PC-3 (cell line): ENCODE measurements at regions of chr4 and their contacts with region 1.

Region 1: GRCh38 chr4:101020956-101021355 is 326.4 kb downstream of the PPP3CA start:
- DNase-seq: peak; percentile 69
- ATAC-seq: peak; percentile 87
- H3K4me3 ChIP-seq: no peak overlapping the region
- H3K27ac ChIP-seq: peak overlapping the region; percentile 83
- H3K4me1 ChIP-seq: peaks cover 29% of the 10 kb centered on the region
- H3K27me3 ChIP-seq: no peaks in the 10 kb centered on the region
- CTCF ChIP-seq: no peak

Region 2: GRCh38 chr4:101000496-101000895 is 20.5 kb before region 1 on chr4:
- CTCF ChIA-PET with region 1: no interaction called
- POLR2A ChIA-PET with region 1: no interaction called
- intact Hi-C with region 1: no loop called
- DNase-seq: no peak
- ATAC-seq: no peak
- H3K4me3 ChIP-seq: no peak overlapping the region
- H3K27ac ChIP-seq: no peak overlapping the region
- H3K4me1 ChIP-seq: no peaks in the 10 kb centered on the region
- H3K27me3 ChIP-seq: no peaks in the 10 kb centered on the region
- CTCF ChIP-seq: no peak

Region 3: DNA sequence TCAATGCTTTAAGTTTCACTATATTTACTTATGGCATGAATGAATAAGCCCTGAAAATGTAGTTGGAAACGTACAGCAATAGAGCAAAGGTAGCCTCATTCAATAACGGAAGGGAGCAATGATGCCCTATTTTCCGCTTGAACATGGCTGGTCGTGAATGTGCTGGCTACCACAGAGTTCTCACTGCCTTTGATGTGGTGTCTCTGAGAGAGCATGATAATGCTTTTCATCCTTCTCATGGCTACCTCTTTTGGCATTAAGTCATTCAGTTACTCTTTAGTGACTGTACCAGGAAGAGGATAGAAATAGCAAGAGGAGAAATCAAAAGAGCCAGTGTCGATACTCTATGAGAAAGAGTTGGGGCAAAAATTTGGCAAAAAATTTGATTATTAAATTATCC is 18.4 kb after region 1 on chr4:
- CTCF ChIA-PET with region 1: no interaction called
- POLR2A ChIA-PET with region 1: no interaction called
- intact Hi-C with region 1: no loop called
- DNase-seq: no peak
- ATAC-seq: no peak
- H3K4me3 ChIP-seq: no peak overlapping the region
- H3K27ac ChIP-seq: no peak overlapping the region
- H3K4me1 ChIP-seq: no peaks in the 10 kb centered on the region
- H3K27me3 ChIP-seq: no peaks in the 10 kb centered on the region
- CTCF ChIP-seq: no peak

Region 4: GRCh38 chr4:101086801-101087586 is 66.0 kb after region 1 on chr4:
- CTCF ChIA-PET with region 1: no interaction called
- POLR2A ChIA-PET with region 1: no interaction called
- intact Hi-C with region 1: no loop called
- DNase-seq: peak; percentile 18
- ATAC-seq: no peak
- H3K4me3 ChIP-seq: no peak overlapping the region
- H3K27ac ChIP-seq: no peak overlapping the region
- H3K4me1 ChIP-seq: no peaks in the 10 kb centered on the region
- H3K27me3 ChIP-seq: no peaks in the 10 kb centered on the region
- CTCF ChIP-seq: peak; percentile 48

Region 5: GRCh38 chr4:101160792-101161592 is 140.0 kb after region 1 on chr4:
- CTCF ChIA-PET with region 1: no interaction called
- POLR2A ChIA-PET with region 1: no interaction called
- intact Hi-C with region 1: loop called (anchors 2 kb)
- DNase-seq: peak; percentile 91
- ATAC-seq: peak; percentile 88
- H3K4me3 ChIP-seq: no peak overlapping the region
- H3K27ac ChIP-seq: peak overlapping the region; percentile 100
- H3K4me1 ChIP-seq: peaks cover 31% of the 10 kb centered on the region
- H3K27me3 ChIP-seq: no peaks in the 10 kb centered on the region
- CTCF ChIP-seq: no peak

Region 6: DNA sequence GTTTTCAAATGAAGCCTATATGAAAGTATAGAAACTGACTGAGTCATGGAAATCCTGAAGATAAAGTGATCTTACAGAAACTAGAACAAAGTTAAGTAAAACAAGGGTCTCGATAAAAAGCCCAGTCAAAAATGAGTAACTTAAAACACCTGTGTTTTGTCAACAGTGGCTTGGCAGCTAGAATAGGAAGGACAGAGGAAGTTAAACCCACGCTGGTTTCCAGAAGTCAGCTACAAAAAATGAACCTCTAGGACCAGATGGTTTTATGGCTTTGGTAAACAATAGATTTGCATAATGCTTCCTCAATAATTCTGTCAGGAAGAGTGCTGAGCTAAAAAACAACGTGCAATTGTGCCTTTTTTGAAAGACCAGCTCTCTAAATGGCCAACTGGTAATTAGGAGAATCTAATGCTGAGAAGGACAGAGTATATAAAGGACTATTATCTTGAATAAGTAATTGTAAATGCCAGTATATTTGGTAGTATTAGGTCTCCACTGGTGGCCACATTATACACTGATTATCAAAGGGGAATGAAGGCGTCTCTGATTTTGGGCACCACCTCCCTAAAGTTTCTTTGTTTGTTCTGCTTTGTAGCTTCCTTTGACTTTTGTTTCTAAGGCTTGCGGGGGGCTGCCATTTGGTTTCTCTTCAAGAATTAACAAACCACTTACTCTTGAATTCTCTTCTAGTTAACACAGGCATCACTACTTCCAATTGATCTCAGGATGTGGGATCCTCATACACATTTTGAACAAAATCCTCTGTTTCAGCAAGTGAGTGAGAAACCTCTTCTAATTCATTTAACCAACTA is 398.6 kb after region 1 on chr4:
- CTCF ChIA-PET with region 1: no interaction called
- POLR2A ChIA-PET with region 1: no interaction called
- intact Hi-C with region 1: no loop called
- DNase-seq: peak; percentile 89
- ATAC-seq: peak; percentile 88
- H3K4me3 ChIP-seq: no peak overlapping the region
- H3K27ac ChIP-seq: peak overlapping the region; percentile 77
- H3K4me1 ChIP-seq: peaks cover 26% of the 10 kb centered on the region
- H3K27me3 ChIP-seq: no peaks in the 10 kb centered on the region
- CTCF ChIP-seq: no peak

Region 7: GRCh38 chr4:101977076-101977475 is 956.1 kb after region 1 on chr4:
- CTCF ChIA-PET with region 1: no interaction called
- POLR2A ChIA-PET with region 1: no interaction called
- intact Hi-C with region 1: loop called (anchors 5 kb)
- DNase-seq: peak; percentile 93
- ATAC-seq: peak; percentile 90
- H3K4me3 ChIP-seq: no peak overlapping the region
- H3K27ac ChIP-seq: peak overlapping the region; percentile 72
- H3K4me1 ChIP-seq: peaks cover 73% of the 10 kb centered on the region
- H3K27me3 ChIP-seq: no peaks in the 10 kb centered on the region
- CTCF ChIP-seq: no peak